T-cell (primary cell): ENCODE measurements at regions of chr1 and their contacts with region 1.

Region 1: DNA sequence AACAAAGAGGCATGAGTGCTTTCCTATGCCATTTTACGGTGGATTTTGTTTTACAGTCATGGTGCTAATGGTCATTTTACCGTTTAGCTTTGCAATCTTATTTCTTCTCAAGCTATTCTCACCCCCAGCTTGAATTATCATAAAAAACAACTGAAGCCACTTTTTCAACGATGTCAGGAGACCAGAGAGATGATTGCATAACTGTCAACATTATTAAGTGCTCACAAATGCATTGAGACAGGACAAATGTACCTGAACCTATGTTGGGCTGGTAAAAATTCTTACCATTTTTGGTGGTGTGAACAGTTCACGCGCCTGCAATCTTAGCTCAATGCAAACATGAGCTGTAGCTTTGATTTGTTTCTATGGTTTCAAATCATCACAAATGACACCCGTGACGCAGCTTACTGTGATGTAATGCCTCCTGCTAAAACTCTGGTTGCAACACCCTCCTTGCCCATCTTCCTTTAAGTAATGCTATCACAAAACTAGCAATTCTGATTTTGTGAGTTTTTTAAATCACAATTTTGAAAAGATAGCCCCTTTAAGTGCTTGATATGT is 104.4 kb downstream of the UCHL5 start:
- DNase-seq: peak in 9 of 35 experiments; percentile 0 to 37 (median 4)
- ATAC-seq: no peak
- H3K4me3 ChIP-seq: no peak overlapping the region
- H3K4me3 Mint-ChIP-seq: no peak overlapping the region
- H3K27ac ChIP-seq: no peak overlapping the region
- H3K27ac Mint-ChIP-seq: no peak overlapping the region
- H3K4me1 ChIP-seq: no peaks in the 10 kb centered on the region
- H3K4me1 Mint-ChIP-seq: no peaks in the 10 kb centered on the region
- H3K27me3 ChIP-seq: no peaks in the 10 kb centered on the region
- H3K27me3 Mint-ChIP-seq: no peaks in the 10 kb centered on the region

Region 2: GRCh38 chr1:192913683-192914082 is 41.1 kb before region 1 on chr1:
- CTCF ChIA-PET with region 1: no interaction called
- POLR2A ChIA-PET with region 1: interaction called in 1 of 2 experiments, 11 read pairs
- DNase-seq: no peak
- ATAC-seq: no peak
- H3K4me3 ChIP-seq: no peak overlapping the region
- H3K4me3 Mint-ChIP-seq: no peak overlapping the region
- H3K27ac ChIP-seq: no peak overlapping the region
- H3K27ac Mint-ChIP-seq: no peak overlapping the region
- H3K4me1 ChIP-seq: no peaks in the 10 kb centered on the region
- H3K4me1 Mint-ChIP-seq: no peaks in the 10 kb centered on the region
- H3K27me3 ChIP-seq: peaks cover 0 to 4% of the 10 kb centered on the region in 2 experiments
- H3K27me3 Mint-ChIP-seq: no peaks in the 10 kb centered on the region

Region 3: GRCh38 chr1:193042766-193043691 is 88.2 kb after region 1 on chr1:
- CTCF ChIA-PET with region 1: no interaction called
- POLR2A ChIA-PET with region 1: no interaction called
- DNase-seq: no peak
- ATAC-seq: no peak
- H3K4me3 ChIP-seq: no peak overlapping the region
- H3K4me3 Mint-ChIP-seq: no peak overlapping the region
- H3K27ac ChIP-seq: no peak overlapping the region
- H3K27ac Mint-ChIP-seq: peak overlapping the region; percentile 13 to 49
- H3K4me1 ChIP-seq: no peaks in the 10 kb centered on the region
- H3K4me1 Mint-ChIP-seq: peaks cover 12 to 31% (median 22%) of the 10 kb centered on the region in 3 donors
- H3K27me3 ChIP-seq: no peaks in the 10 kb centered on the region
- H3K27me3 Mint-ChIP-seq: no peaks in the 10 kb centered on the region

Region 4: DNA sequence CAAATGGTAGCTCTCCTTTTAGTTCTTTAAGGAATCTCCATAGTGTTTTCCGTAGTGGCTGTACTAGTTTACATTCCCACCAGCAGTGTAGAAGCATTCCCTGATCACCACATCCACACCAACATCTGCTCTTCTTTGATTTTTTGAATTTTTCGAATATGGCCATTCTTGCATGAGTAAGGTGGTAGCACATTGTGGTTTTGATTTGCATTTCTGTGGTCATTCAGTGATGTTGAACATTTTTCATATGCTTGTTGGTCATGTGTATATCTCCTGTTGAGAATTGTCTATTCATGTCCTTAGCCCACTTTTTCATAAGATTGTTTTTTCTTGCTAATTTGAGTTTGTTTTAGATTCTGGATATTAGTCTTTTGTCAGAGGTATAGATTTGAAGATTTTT is 316.2 kb after region 1 on chr1:
- CTCF ChIA-PET with region 1: no interaction called
- POLR2A ChIA-PET with region 1: no interaction called
- DNase-seq: no peak
- ATAC-seq: no peak
- H3K4me3 ChIP-seq: no peak overlapping the region
- H3K4me3 Mint-ChIP-seq: no peak overlapping the region
- H3K27ac ChIP-seq: no peak overlapping the region
- H3K27ac Mint-ChIP-seq: no peak overlapping the region
- H3K4me1 ChIP-seq: no peaks in the 10 kb centered on the region
- H3K4me1 Mint-ChIP-seq: peaks cover 0 to 2% (median 0%) of the 10 kb centered on the region in 3 donors
- H3K27me3 ChIP-seq: no peaks in the 10 kb centered on the region
- H3K27me3 Mint-ChIP-seq: no peaks in the 10 kb centered on the region